Activated CD4-positive, alpha-beta memory T cell treated with anti-CD3 and anti-CD28 coated beads for 36 hours (primary cell): ENCODE measurements at regions of chr7 and their contacts with region 1.

Region 1: GRCh38 chr7:156892821-156893706 is at the start of gene LMBR1:
- DNase-seq: peak; percentile 97
- H3K4me3 Mint-ChIP-seq: peak within 1 kb of the TSS; percentile 89
- H3K27ac Mint-ChIP-seq: peak within 1 kb of the TSS; percentile 91
- H3K4me1 Mint-ChIP-seq: peaks cover 41% of the 10 kb centered on the region
- H3K27me3 Mint-ChIP-seq: no peaks in the 10 kb centered on the region
- total RNA-seq, gene LMBR1: 36.6 to 37.8 TPM

Region 2: DNA sequence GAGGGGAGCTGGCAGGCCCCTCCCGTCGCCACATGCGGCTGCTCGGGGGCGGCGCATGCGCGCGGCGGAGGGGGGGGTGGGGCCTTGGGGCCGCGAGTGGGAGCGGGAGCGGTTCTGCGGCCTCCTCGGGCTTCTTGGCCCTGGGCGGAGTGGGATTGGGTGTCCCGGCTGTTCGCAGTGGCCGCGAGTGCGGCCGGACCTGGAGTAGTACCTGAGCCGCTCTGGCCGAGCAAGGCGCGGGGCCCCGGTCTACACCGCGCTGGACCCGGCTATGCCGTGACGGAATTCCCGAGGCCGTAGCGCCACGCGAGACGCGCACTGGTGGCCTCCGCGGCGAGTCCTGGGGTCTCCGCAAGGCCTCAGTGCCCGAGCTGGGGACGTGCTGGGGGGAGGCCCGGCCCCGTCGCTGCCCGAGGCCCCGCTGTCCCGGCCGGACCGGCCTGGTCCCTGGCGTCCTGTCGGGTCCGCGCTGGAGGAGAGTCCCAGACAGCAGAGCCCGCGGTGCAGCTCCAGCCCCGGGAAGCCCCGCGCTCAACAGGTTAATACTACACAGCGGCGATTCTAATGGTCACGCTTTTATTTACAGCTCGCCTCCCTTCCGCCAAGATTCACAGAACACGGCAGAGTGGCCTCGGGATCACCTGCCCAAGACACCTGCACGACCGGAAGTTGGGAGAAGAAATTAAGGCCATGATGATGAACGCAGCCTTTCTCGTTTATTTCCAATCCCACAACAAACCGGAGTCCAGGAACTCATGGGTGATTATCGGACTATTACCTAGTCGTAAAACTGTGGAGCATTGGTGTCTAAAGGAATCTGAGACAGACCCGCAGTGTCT is 1889.5 kb before region 1 on chr7:
- CTCF ChIA-PET with region 1: no interaction called
- POLR2A ChIA-PET with region 1: no interaction called
- intact Hi-C with region 1: loop called (anchors 10 kb)
- DNase-seq: peak; percentile 89
- H3K4me3 Mint-ChIP-seq: peak overlapping the region; percentile 89
- H3K27ac Mint-ChIP-seq: peak overlapping the region; percentile 91
- H3K4me1 Mint-ChIP-seq: peaks cover 12% of the 10 kb centered on the region
- H3K27me3 Mint-ChIP-seq: no peaks in the 10 kb centered on the region

Region 3: DNA sequence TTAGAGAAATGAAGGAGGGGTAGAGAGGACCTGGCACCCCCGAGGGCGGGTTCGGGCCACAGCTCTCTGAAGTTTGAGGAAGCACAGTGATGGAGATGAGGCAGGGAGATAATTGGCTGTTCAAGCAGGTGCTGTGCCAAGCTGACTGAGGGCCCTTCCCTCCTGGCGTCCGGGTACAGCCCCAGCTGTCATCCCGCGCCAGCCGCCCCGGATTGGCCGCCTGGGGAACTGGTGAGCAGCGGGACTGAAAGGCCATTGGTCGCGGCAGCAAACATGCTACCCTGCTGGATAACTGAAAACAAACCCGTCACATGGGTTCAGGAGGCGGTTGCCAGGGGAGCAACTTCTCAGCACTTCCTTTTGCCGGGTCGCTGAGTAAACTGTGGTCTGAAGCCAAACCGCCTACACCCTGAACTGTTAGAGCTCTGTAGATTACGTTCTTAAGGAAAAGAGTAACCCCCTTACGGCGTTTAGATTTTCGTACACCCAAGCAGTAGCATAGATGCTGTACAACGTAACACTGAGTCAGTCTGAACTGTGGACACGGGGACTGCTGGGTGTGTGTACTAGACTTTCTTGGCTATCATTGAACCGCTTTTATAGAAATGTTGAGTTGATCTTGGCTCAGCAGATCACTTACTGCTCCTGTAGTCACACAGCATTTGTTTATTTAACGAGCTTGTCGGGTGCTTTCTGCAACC is 1594.1 kb before region 1 on chr7:
- CTCF ChIA-PET with region 1: no interaction called
- POLR2A ChIA-PET with region 1: no interaction called
- intact Hi-C with region 1: loop called (anchors 5 kb)
- DNase-seq: peak; percentile 98
- H3K4me3 Mint-ChIP-seq: peak overlapping the region; percentile 93
- H3K27ac Mint-ChIP-seq: peak overlapping the region; percentile 96
- H3K4me1 Mint-ChIP-seq: peaks cover 38% of the 10 kb centered on the region
- H3K27me3 Mint-ChIP-seq: no peaks in the 10 kb centered on the region

Region 4: DNA sequence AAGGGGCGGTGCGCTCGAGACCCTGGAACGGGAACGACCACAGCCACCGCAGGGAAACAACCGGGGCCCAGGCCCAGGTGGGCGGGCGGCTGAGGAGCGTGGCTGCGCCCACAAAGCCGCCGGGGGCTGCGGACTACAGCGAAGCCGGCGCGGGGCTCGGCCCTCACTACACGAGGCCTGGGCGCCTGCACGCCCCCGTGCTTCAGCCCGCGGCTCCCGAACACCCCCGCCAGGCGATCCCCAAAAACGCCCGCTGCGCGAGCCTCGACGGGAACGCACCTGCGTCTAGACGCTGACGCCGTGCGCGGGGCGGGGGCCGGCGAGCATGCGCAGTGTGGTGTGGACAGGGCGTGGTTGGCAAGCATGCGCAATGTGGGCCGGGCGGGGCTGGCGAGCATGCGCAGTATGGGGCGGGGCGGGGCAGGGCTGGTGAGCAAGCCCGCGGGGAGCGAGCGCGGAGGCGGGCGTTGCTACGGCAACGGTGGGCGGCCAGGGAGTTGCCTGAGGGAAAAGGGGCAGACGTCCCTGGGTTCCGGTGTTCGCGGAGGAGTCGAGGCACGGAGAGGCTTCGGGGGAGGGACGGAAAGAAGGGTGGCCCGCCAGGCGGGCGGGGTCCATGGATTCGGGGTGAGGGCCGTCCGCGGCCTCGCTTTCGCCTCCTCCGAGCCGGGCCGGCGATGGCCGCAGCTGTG is 252.7 kb before region 1 on chr7 and contains the start of gene RNF32:
- CTCF ChIA-PET with region 1: interaction called, 3 read pairs
- POLR2A ChIA-PET with region 1: interaction called, 6 read pairs
- intact Hi-C with region 1: loop called (anchors 2 kb)
- DNase-seq: peak; percentile 99
- H3K4me3 Mint-ChIP-seq: peak within 1 kb of the TSS; percentile 88
- H3K27ac Mint-ChIP-seq: peak within 1 kb of the TSS; percentile 84
- H3K4me1 Mint-ChIP-seq: peaks cover 8% of the 10 kb centered on the region
- H3K27me3 Mint-ChIP-seq: peaks cover 10% of the 10 kb centered on the region
- total RNA-seq, gene RNF32: 1.4 to 2.6 TPM

Region 5: DNA sequence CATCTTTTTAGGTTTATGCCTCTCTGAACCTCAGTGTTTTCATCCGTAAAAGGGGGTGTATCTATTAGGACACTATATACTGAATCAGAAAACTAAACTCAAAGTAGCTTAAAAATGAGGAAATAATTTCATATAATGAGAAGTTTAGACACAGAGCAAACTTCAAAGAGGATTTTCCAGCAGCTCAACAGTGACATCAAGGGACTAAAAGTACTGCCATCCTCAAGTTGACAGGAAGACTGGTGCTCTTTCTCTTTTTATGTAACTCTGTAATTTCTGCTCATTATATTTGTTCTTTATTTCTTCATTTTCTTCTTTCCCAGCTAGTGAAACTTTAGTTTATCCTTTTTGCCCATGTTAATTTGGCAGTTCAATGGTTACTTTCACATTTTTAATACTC is 149.7 kb before region 1 on chr7:
- CTCF ChIA-PET with region 1: no interaction called
- POLR2A ChIA-PET with region 1: no interaction called
- intact Hi-C with region 1: no loop called
- DNase-seq: no peak
- H3K4me3 Mint-ChIP-seq: no peak overlapping the region
- H3K27ac Mint-ChIP-seq: no peak overlapping the region
- H3K4me1 Mint-ChIP-seq: no peaks in the 10 kb centered on the region
- H3K27me3 Mint-ChIP-seq: no peaks in the 10 kb centered on the region

Region 6: DNA sequence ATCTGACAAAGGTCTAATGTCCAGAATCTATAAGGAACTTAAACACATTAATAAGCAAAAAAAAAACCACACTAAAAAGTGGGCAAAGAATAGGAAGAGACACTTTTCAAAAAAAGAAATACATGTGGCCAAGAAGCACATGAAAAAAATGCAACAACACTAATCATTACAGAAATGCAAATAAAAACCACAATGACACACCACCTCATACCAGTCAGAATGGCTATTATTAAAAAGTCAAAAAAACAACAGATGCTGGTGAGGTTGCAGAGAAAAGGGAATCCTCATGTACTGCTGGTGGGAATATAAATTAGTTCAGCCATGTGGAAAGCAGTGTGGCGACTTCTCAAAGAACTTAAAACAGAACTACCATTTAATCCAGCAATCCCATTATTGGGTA is 119.1 kb before region 1 on chr7:
- CTCF ChIA-PET with region 1: interaction called, 3 read pairs
- POLR2A ChIA-PET with region 1: no interaction called
- intact Hi-C with region 1: loop called (anchors 2 kb)
- DNase-seq: no peak
- H3K4me3 Mint-ChIP-seq: no peak overlapping the region
- H3K27ac Mint-ChIP-seq: peak overlapping the region; percentile 9
- H3K4me1 Mint-ChIP-seq: peaks cover 58% of the 10 kb centered on the region
- H3K27me3 Mint-ChIP-seq: no peaks in the 10 kb centered on the region

Region 7: DNA sequence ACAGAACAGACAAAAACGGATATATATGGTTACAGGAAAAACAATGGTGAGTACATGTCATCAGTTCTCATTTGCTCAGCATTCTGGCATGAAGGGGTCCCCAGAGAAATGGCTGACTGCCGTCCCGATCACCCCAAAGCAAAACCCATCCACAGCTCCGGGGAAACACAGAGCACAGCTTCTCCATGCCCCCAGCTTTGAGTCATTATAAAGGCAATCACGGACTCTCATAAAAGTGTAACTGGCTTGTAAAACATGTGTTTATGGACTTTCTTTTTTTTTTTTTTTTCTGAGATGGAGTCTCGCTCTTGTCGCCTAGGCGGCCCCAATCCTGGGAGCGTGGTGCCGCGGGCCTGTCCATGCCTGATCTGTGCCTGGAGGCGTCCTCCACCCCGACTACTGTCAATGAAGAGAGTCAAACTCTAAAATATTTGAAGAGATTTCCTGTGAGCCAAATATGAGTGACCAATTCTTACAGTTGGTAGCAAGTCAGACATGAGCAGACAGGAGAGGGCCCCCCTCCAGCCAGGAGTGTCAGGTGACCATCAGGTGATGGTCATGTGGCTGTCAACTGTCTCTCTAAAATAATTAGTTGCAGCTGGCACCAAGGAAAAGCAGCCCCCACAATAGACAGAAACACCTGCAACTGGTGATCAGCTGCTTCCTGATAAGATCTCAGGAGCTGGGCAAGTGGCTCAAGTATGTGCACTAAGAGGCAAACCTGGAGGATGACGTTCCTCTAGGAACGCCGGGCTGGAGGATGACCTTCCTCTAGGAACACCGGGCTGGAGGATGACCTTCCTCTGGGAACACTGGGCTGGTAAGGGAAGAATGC is 34.7 kb after region 1 on chr7:
- CTCF ChIA-PET with region 1: no interaction called
- POLR2A ChIA-PET with region 1: interaction called, 7 read pairs
- intact Hi-C with region 1: loop called (anchors 1 kb)
- DNase-seq: no peak
- H3K4me3 Mint-ChIP-seq: no peak overlapping the region
- H3K27ac Mint-ChIP-seq: no peak overlapping the region
- H3K4me1 Mint-ChIP-seq: peaks cover 34% of the 10 kb centered on the region
- H3K27me3 Mint-ChIP-seq: peaks cover 4% of the 10 kb centered on the region

Region 8: DNA sequence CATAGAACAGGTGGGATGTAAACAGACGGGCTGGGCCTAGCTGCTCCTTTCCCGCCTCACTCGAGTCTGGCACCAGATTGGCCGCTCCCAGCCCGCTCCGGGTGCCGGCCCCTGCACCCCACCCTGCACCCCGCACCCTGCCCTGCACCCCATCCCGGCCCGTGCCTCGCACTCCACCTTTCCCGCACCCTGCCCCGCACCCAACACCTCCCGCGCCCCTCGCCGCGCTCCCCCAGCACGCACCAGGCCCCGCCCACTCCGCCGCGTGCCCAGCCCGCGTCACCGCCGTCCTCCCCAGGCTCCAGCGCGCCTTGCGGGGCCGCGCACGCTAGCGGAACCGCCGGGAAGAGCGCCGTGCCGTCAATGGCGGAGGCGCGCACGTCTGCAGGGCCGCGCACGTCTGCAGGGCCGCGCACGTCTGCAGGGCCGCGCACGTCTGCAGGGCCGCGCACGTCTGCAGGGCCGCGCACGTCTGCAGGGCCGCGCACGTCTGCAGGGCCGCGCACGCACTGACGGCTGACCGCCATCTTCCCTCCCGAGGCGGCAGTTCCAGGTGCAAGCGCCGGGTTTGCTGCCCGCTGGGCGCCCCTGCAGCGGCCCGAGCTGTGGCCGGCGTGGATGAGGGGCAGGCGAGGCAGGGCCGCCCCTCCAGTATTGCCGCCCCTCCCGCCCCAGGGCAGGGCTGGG is 245.5 kb after region 1 on chr7 and contains the start of gene UBE3C:
- CTCF ChIA-PET with region 1: no interaction called
- POLR2A ChIA-PET with region 1: interaction called, 3 read pairs
- intact Hi-C with region 1: loop called (anchors 1 kb)
- DNase-seq: peak; percentile 91
- H3K4me3 Mint-ChIP-seq: peak within 1 kb of the TSS; percentile 79
- H3K27ac Mint-ChIP-seq: peak within 1 kb of the TSS; percentile 91
- H3K4me1 Mint-ChIP-seq: peaks cover 37% of the 10 kb centered on the region
- H3K27me3 Mint-ChIP-seq: no peaks in the 10 kb centered on the region
- total RNA-seq, gene UBE3C: 59.8 to 59.9 TPM

Region 9: GRCh38 chr7:157814931-157815705 is 922.1 kb after region 1 on chr7:
- CTCF ChIA-PET with region 1: no interaction called
- POLR2A ChIA-PET with region 1: no interaction called
- intact Hi-C with region 1: no loop called
- DNase-seq: no peak
- H3K4me3 Mint-ChIP-seq: no peak overlapping the region
- H3K27ac Mint-ChIP-seq: no peak overlapping the region
- H3K4me1 Mint-ChIP-seq: peaks cover 5% of the 10 kb centered on the region
- H3K27me3 Mint-ChIP-seq: no peaks in the 10 kb centered on the region